ENCODE measurements at regions of chr10 and their contacts with region 1.

Region 1: DNA sequence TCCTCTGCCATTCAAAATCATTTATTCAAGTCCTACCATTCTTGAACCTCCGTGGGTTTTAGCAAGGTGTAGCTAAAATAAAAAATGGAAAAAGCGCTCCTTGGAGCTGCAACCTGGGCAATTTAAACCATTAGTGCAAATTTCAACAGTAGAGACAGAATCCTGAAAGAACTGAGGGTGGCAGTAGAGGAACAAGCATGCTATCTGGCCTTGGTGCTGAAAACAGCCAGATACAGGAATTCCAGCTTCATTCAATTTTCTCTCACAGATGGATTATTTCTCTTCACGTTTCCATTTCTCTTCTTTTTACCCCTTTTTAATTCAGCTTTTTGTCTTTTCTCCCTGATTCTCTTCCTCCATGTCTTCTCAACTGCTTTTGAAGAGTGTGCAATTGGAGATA is 77.7 kb downstream of the OTUD1 start:
- DNase-seq: no peak
- H3K4me3 Mint-ChIP-seq: no peak overlapping the region
- H3K27ac Mint-ChIP-seq: peak overlapping the region; percentile 21
- H3K4me1 Mint-ChIP-seq: peaks cover 18% of the 10 kb centered on the region
- H3K27me3 Mint-ChIP-seq: peaks cover 3% of the 10 kb centered on the region

Region 2: DNA sequence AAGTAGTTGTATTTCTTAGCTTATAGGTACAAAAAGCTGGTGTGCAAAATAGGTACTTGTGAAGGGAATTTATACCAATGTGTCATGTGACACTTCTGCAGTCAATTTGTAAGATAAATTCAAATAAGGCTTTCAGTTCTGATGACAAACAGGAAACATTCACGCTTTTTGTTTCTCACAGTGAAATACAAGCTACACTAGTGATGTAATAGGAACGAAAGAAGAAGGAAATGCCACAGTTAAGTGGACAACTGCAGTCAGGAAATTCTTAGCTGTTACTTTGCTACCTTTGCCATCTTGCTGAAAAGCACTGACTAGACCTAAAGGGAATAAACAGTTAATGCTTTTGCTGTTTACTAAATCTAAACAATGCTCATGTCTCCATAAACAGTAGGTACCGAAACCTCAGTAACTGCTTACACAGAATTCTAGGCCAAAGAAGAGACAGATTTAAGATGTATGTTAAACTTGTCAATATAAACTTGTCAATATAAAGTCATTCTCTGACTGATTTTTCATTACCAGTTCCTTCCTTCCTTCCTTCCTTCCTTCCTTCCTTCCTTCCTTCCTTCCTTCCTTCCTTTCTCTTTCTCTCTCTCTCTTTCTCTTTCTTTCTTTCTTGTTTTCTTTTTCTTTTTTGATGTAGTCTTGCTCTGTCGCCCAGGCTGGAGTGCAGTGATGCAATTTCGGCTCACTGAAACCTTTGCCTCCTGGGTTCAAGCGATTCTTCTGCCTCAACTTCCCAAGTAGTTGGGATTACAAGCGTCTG is 67.5 kb before region 1 on chr10:
- intact Hi-C with region 1: loop called (anchors 5 kb)
- DNase-seq: no peak
- H3K4me3 Mint-ChIP-seq: peak overlapping the region; percentile 21
- H3K27ac Mint-ChIP-seq: peak overlapping the region; percentile 88
- H3K4me1 Mint-ChIP-seq: peaks cover 35% of the 10 kb centered on the region
- H3K27me3 Mint-ChIP-seq: no peaks in the 10 kb centered on the region

Region 3: DNA sequence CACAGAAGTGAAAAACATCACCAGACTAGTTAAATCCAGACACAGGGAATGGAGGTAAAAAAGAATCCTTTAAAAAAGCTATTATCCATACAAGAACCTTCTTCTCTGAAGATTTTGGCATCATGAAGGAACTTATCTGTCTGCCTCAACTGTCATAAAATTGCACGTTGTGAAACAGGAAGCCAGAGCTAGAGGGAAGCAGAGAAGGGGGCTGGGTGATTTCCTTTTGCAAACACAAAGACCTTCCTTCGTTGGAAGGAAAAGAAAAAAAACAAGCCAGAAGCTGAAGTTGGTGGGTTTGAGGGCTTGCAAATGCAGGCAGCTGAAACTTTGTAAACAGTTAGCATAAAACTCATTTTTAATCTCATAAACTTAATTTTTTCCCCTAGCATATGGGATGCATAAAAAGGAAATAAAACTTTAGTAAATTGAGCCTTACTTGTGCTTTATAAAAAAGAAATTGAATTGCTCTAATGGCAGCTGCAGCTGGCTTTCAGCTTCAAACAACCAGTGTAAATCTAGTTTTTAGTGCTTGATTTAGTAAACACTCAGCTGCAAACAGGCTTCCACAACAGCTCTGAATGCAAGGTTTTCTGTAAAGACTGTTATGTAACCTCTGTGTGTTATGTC is 24.0 kb after region 1 on chr10:
- intact Hi-C with region 1: loop called (anchors 1 kb)
- DNase-seq: no peak
- H3K4me3 Mint-ChIP-seq: no peak overlapping the region
- H3K27ac Mint-ChIP-seq: no peak overlapping the region
- H3K4me1 Mint-ChIP-seq: peaks cover 37% of the 10 kb centered on the region
- H3K27me3 Mint-ChIP-seq: no peaks in the 10 kb centered on the region

Region 4: DNA sequence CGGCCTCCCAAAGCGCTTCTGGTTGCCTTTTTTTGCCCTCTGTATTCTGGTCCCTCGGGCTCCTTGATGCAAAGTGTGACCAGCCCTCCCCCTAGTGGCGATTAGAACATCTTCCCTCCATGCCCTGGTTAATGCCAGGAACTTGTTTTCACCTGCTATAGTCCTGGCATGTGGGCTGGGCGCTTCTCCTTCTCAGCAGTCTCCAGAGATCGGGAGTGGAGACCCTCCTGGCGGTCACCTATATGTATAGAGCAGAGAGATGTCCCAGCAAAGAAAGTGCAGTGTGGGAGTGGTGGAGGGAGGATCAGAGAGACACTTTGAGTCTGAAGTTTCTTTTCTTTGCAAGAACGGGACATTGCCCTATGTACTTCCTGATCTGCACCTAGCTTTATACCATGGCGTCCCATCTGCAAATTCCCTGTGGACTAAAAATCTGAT is 186.5 kb after region 1 on chr10:
- intact Hi-C with region 1: loop called (anchors 1 kb)
- DNase-seq: peak; percentile 14
- H3K4me3 Mint-ChIP-seq: no peak overlapping the region
- H3K27ac Mint-ChIP-seq: no peak overlapping the region
- H3K4me1 Mint-ChIP-seq: no peaks in the 10 kb centered on the region
- H3K27me3 Mint-ChIP-seq: peaks cover 14% of the 10 kb centered on the region

Region 5: DNA sequence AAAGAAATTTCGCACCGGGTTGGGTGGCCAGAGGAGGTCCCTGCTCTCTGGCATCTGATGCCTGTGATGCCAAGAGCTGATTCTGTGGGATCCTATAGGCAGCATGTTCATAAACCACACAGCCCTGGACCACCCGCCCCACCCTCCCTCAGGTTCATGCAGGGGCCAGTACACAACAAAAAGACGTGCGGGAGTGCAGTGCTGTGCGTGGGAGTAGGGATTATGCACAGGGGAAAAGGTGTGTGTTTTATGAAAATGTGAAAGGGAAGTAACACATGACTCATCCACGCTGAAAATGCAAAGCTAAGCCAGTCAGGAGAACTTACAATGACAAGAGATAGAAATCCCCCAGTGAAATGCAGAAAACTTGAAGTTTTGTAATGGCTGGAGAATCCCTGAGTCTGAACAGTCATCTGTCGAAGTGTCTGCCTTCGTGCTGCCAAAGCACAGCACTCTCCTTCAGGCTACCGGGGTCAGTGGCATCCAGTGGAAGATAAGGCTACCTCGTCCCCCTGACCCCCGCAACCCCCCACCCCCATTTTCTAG is 693.5 kb after region 1 on chr10:
- intact Hi-C with region 1: loop called (anchors 10 kb)
- DNase-seq: peak; percentile 8
- H3K4me3 Mint-ChIP-seq: peak overlapping the region; percentile 83
- H3K27ac Mint-ChIP-seq: peak overlapping the region; percentile 90
- H3K4me1 Mint-ChIP-seq: peaks cover 39% of the 10 kb centered on the region
- H3K27me3 Mint-ChIP-seq: peaks cover 24% of the 10 kb centered on the region